Caco-2 (cell line): ENCODE measurements at regions of chr18 and their contacts with region 1.

Region 1: DNA sequence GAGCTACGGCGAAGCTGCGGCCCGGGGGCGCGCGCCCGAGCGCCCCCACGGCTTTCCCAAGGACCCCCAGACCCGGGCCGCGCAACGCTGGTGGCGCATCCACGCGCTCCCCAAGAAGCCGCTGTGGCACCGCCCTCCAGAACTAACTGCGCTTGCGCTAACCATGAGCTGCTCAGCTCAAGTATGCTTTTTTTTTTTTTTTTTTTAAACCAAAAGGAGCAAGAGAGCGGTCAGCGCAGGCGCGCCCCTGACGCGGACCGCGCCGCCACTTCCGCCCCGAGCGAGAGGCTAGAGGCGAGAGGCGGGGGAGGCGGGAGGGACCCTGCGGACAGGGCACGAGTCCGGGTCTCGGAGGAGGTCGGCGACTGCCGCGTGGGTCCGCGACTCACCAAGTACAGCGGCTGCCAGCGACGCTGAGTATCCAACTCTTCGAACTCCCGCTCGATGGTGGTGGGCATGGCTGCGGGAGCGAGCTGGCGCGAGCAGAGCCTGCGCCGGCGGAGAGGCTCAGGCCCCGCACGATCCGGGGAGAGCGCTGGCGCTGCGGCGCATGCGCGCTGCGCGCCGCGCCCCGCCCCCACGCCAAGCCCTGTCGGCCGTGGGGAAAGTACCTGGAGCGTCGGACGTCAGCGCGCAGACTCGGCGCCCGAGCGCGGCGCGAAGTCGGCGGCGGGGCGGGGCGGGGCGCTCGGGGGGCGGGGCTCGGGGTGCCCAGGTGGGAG is at the start of gene PTPN2:
- DNase-seq: peak; percentile 93 to 95
- H3K4me3 ChIP-seq: peak within 1 kb of the TSS; percentile 97
- H3K4me3 Mint-ChIP-seq: peak within 1 kb of the TSS; percentile 73
- H3K27ac Mint-ChIP-seq: peak within 1 kb of the TSS; percentile 82
- H3K4me1 ChIP-seq: peaks cover 18% of the 10 kb centered on the region
- H3K4me1 Mint-ChIP-seq: peaks cover 28% of the 10 kb centered on the region
- H3K27me3 ChIP-seq: no peaks in the 10 kb centered on the region
- H3K27me3 Mint-ChIP-seq: no peaks in the 10 kb centered on the region
- CTCF ChIP-seq: no peak
- total RNA-seq, gene PTPN2: 53.4 and 55.0 TPM in 2 replicates

Region 2: DNA sequence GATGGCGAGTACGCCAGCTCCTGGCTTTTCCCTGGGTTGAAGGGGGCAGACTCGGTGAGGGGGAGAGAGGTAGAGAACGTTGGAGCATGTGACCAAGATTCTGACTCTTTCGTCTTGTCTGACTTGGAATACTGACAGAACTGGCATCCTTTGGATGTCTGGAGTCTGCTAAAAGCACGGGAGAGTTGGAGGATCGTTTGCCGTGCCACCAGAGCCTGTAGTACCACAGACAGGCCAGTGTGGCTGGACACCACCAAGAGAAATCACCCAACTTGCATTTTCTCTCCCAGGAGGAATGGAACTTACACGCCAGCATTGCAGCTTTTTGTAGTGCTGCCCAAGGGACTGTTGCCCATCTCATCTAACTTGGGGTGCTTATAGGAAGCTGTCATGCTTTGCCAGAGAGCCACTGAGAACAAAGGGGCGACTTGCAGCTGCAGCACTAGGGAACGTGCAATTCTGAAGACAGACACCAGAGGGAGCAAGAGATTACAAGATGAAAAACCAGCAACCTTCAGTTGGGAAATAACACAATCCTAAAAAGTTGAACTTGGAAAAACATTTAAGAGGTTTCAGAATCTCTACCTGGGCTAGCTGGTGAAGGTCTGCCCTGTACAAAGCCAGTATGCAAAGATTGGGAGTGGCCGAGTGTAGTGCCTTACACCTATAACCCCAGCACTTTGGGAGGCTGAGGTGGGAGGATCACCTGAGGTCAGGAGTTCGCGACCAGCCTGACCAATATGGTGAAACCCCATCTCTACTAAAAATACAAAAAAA is 156.9 kb before region 1 on chr18:
- CTCF ChIA-PET with region 1: no interaction called
- POLR2A ChIA-PET with region 1: interaction called, 16 read pairs
- intact Hi-C with region 1: no loop called
- DNase-seq: peak; percentile 68 to 82
- H3K4me3 ChIP-seq: no peak overlapping the region
- H3K4me3 Mint-ChIP-seq: no peak overlapping the region
- H3K27ac Mint-ChIP-seq: peak overlapping the region; percentile 82
- H3K4me1 ChIP-seq: peaks cover 27% of the 10 kb centered on the region
- H3K4me1 Mint-ChIP-seq: peaks cover 16% of the 10 kb centered on the region
- H3K27me3 ChIP-seq: no peaks in the 10 kb centered on the region
- H3K27me3 Mint-ChIP-seq: no peaks in the 10 kb centered on the region
- CTCF ChIP-seq: peak; percentile 85 to 94

Region 3: GRCh38 chr18:12777500-12777944 is 106.3 kb before region 1 on chr18:
- CTCF ChIA-PET with region 1: interaction called, 13 read pairs
- POLR2A ChIA-PET with region 1: interaction called, 53 read pairs
- intact Hi-C with region 1: loop called (anchors 2 kb)
- DNase-seq: peak; percentile 52 to 71
- H3K4me3 ChIP-seq: peak overlapping the region; percentile 53
- H3K4me3 Mint-ChIP-seq: peak overlapping the region; percentile 83
- H3K27ac Mint-ChIP-seq: peak overlapping the region; percentile 86
- H3K4me1 ChIP-seq: 0 out of 2 replicates have a peak, but pooled peaks cover 6% of the 10 kb centered on the region
- H3K4me1 Mint-ChIP-seq: no peaks in the 10 kb centered on the region
- H3K27me3 ChIP-seq: no peaks in the 10 kb centered on the region
- H3K27me3 Mint-ChIP-seq: no peaks in the 10 kb centered on the region
- CTCF ChIP-seq: no peak

Region 4: GRCh38 chr18:12862467-12862866 is 21.4 kb before region 1 on chr18:
- CTCF ChIA-PET with region 1: interaction called, 4 read pairs
- POLR2A ChIA-PET with region 1: interaction called, 70 read pairs
- intact Hi-C with region 1: no loop called
- DNase-seq: peak; percentile 64 to 78
- H3K4me3 ChIP-seq: no peak overlapping the region
- H3K4me3 Mint-ChIP-seq: no peak overlapping the region
- H3K27ac Mint-ChIP-seq: peak overlapping the region; percentile 61
- H3K4me1 ChIP-seq: peaks cover 10% of the 10 kb centered on the region
- H3K4me1 Mint-ChIP-seq: peaks cover 11% of the 10 kb centered on the region
- H3K27me3 ChIP-seq: no peaks in the 10 kb centered on the region
- H3K27me3 Mint-ChIP-seq: no peaks in the 10 kb centered on the region
- CTCF ChIP-seq: no peak

Region 5: DNA sequence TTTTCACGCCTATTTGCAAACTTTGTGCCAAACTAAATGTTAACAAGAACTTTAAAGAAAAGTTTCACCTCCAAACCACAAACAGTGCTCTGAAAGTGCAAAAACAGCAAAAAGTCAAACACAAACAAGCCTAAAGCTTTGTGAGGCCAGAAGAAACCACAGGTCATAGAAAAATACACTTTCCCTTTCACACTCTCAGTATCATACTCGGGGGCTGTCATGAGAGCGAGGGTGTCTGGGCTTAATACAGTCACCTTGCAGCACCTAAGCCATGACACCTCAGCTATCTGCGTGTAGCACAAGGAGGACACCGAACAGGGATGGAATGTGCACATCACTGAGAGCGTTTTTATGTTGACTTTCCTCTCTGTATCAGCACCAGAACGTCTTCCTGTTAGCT is 37.3 kb after region 1 on chr18:
- CTCF ChIA-PET with region 1: interaction called, 3 read pairs
- POLR2A ChIA-PET with region 1: interaction called, 12 read pairs
- intact Hi-C with region 1: no loop called
- DNase-seq: no peak
- H3K4me3 ChIP-seq: no peak overlapping the region
- H3K4me3 Mint-ChIP-seq: no peak overlapping the region
- H3K27ac Mint-ChIP-seq: no peak overlapping the region
- H3K4me1 ChIP-seq: no peaks in the 10 kb centered on the region
- H3K4me1 Mint-ChIP-seq: no peaks in the 10 kb centered on the region
- H3K27me3 ChIP-seq: no peaks in the 10 kb centered on the region
- H3K27me3 Mint-ChIP-seq: no peaks in the 10 kb centered on the region
- CTCF ChIP-seq: no peak

Region 6: GRCh38 chr18:12947355-12948041 is 63.7 kb after region 1 on chr18 and contains the start of gene SEH1L:
- CTCF ChIA-PET with region 1: interaction called, 3 read pairs
- POLR2A ChIA-PET with region 1: interaction called, 23 read pairs
- intact Hi-C with region 1: no loop called
- DNase-seq: peak; percentile 99
- H3K4me3 ChIP-seq: peak within 1 kb of the TSS; percentile 84
- H3K4me3 Mint-ChIP-seq: peak within 1 kb of the TSS; percentile 100
- H3K27ac Mint-ChIP-seq: peak within 1 kb of the TSS; percentile 100
- H3K4me1 ChIP-seq: peaks cover 19% of the 10 kb centered on the region
- H3K4me1 Mint-ChIP-seq: peaks cover 11% of the 10 kb centered on the region
- H3K27me3 ChIP-seq: no peaks in the 10 kb centered on the region
- H3K27me3 Mint-ChIP-seq: no peaks in the 10 kb centered on the region
- CTCF ChIP-seq: no peak
- total RNA-seq, gene SEH1L: 116 and 118 TPM in 2 replicates